ENCODE measurements at regions of chr13 and their contacts with region 1.

Region 1: DNA sequence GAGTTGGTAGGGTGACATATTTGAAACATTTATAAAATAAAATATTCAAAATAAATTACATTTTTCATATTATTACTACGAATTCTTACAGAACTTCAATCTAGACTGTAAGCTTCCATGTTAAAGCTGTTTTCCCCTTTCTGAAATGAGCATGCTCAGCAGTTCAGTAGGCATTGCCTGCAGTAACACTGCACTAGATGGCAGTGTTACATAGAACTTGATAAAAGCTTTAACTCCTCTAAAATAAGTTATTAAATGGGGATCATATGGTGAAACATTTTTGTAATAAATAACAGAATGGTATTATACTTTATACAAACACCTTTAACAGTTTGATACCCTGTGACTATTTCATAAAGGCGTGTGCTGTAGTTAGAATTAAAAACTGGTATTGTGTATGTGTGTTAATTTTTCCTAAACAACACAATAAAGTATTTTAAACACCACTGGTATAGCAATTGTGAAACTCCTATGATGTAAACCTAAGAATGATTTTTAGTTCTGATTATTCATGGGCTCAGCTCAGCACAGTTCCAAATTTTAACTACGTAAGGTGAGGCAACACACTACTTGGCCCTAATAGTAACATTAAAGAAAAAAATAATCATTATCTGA is 11.6 kb upstream of the GPR18 start:
- DNase-seq: peak; percentile 44
- H3K4me3 Mint-ChIP-seq: no peak overlapping the region
- H3K27ac Mint-ChIP-seq: peak overlapping the region; percentile 16
- H3K4me1 Mint-ChIP-seq: peaks cover 69% of the 10 kb centered on the region
- H3K27me3 Mint-ChIP-seq: no peaks in the 10 kb centered on the region

Region 2: DNA sequence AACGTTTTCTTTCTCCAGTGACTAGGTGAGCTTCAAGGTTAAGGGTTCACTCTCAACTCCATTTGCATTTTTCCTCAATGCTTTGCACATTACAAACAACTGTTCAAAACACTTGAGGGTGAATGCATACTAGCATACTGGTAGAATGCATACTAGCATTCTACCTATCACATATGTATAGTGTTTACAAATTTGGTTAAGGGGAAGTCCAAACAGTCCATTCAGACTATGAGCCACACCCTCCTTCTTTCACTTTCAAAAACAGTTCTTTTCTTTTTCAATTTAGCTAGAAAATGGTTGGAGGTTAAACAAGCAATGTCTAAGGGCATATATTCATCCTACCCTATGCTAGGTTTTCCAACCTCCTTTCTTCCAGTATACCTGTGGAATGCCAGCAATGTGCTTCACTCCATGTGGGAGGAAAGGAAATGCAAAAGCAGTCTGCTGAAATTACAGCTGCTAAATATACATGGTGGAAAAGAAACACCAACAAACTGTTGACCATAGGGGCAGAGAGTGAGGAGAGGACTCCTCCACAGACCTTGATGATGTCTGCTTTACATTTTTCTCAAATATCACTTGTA is 394.5 kb before region 1 on chr13:
- CTCF ChIA-PET with region 1: interaction called, 8 read pairs
- intact Hi-C with region 1: loop called (anchors 5 kb)
- DNase-seq: no peak
- H3K4me3 Mint-ChIP-seq: no peak overlapping the region
- H3K27ac Mint-ChIP-seq: peak overlapping the region; percentile 10
- H3K4me1 Mint-ChIP-seq: peaks cover 23% of the 10 kb centered on the region
- H3K27me3 Mint-ChIP-seq: no peaks in the 10 kb centered on the region

Region 3: GRCh38 chr13:98977568-98978265 is 292.0 kb before region 1 on chr13 and contains the start of gene DOCK9:
- CTCF ChIA-PET with region 1: no interaction called
- intact Hi-C with region 1: no loop called
- DNase-seq: no peak
- H3K4me3 Mint-ChIP-seq: no peak within 1 kb of the TSS
- H3K27ac Mint-ChIP-seq: no peak within 1 kb of the TSS
- H3K4me1 Mint-ChIP-seq: peaks cover 82% of the 10 kb centered on the region
- H3K27me3 Mint-ChIP-seq: no peaks in the 10 kb centered on the region
- total RNA-seq, gene DOCK9: 38.3 to 42.1 TPM

Region 4: GRCh38 chr13:99185606-99186005 is 84.1 kb before region 1 on chr13:
- CTCF ChIA-PET with region 1: interaction called, 19 read pairs
- intact Hi-C with region 1: no loop called
- DNase-seq: no peak
- H3K4me3 Mint-ChIP-seq: no peak overlapping the region
- H3K27ac Mint-ChIP-seq: no peak overlapping the region
- H3K4me1 Mint-ChIP-seq: peaks cover 3% of the 10 kb centered on the region
- H3K27me3 Mint-ChIP-seq: no peaks in the 10 kb centered on the region

Region 5: GRCh38 chr13:99288089-99288488 is 18.4 kb after region 1 on chr13:
- CTCF ChIA-PET with region 1: interaction called, 17 read pairs
- intact Hi-C with region 1: no loop called
- DNase-seq: peak; percentile 89
- H3K4me3 Mint-ChIP-seq: peak overlapping the region; percentile 37
- H3K27ac Mint-ChIP-seq: peak overlapping the region; percentile 89
- H3K4me1 Mint-ChIP-seq: peaks cover 80% of the 10 kb centered on the region
- H3K27me3 Mint-ChIP-seq: no peaks in the 10 kb centered on the region

Region 6: DNA sequence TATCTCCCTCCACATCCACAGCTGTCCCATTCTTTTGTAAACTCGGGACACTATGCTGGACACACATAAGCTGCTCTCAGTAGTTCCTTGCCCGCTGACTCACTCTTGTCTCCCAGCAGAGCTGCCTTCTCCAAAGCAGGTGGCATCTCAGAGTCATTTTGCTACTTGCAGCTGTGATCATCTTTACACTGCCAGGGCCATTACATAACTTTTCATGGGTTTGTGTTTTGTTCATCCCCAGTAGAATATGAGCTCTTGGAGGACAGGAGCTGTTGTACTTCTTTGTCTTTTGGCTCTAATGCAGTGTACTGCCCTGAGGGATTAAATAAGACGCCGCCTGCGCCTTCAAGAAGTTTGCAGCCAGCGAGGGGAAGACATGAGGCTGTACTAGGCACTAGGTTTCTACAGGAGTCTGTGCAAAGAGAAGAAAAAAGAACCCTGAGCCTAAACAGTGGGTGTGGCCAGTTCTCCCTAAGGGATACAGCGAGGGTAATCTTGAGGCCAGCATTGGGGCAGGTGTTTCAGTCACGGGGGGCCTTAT is 78.2 kb after region 1 on chr13:
- CTCF ChIA-PET with region 1: interaction called, 19 read pairs
- intact Hi-C with region 1: loop called (anchors 1 kb)
- DNase-seq: peak; percentile 56
- H3K4me3 Mint-ChIP-seq: no peak overlapping the region
- H3K27ac Mint-ChIP-seq: peak overlapping the region; percentile 6
- H3K4me1 Mint-ChIP-seq: peaks cover 64% of the 10 kb centered on the region
- H3K27me3 Mint-ChIP-seq: no peaks in the 10 kb centered on the region

Region 7: DNA sequence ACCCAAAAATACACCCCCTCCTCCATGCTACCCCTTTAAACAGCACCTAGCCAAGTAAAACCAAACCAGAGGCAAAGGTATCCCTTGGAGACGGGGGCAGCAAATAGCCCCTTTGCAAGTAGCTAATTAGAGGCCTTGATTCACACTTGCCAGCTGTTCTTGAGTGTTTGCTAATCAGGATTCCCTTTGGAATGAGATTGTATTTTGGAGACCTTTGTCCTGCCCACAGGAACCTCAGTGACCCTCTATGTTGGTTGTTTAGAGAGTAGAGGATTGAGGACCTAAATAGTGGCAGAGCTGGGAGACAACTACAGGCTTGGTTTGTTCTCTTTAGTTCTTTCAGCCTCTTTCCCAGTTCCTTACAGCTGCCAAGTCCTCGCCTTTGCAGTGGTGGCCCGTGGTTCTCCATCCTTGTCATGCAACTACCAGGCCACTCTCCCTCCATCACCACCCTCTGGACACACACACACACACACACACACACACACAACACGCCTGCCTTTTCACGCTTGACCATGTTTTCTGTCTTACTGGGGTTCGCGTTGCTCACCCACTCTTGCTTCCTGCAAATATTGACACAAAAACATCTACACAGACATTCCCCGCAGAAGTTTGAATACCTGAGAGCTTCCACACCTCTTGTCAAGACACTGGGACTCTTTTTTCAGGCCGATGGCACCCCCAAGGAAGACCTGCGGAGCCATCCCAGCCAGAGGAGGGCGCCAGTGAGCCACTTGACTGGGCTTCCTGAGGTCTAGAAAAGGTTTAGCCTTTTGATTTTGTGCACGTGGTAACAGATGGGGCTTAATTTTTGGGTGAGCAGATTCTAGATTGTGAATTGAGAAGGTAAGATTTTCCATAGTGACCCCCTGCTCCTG is 117.4 kb after region 1 on chr13:
- CTCF ChIA-PET with region 1: interaction called, 175 read pairs
- intact Hi-C with region 1: loop called (anchors 1 kb)
- DNase-seq: peak; percentile 96
- H3K4me3 Mint-ChIP-seq: no peak overlapping the region
- H3K27ac Mint-ChIP-seq: peak overlapping the region; percentile 85
- H3K4me1 Mint-ChIP-seq: peaks cover 72% of the 10 kb centered on the region
- H3K27me3 Mint-ChIP-seq: no peaks in the 10 kb centered on the region